ENCODE measurements at regions of chr1 and their contacts with region 1.

Region 1: GRCh38 chr1:16078925-16079656 is 5.6 kb upstream of the FAM131C start:
- DNase-seq: peak; percentile 55
- H3K4me3 ChIP-seq: no peak overlapping the region
- H3K27ac ChIP-seq: no peak overlapping the region
- H3K4me1 ChIP-seq: peaks cover 29% of the 10 kb centered on the region
- H3K27me3 ChIP-seq: no peaks in the 10 kb centered on the region
- CTCF ChIP-seq: peak; percentile 93 to 96

Region 2: GRCh38 chr1:15916417-15916816 is 162.7 kb before region 1 on chr1:
- CTCF ChIA-PET with region 1: no interaction called
- dilution Hi-C with region 1: no loop called
- in situ Hi-C with region 1: no loop called
- intact Hi-C with region 1: no loop called
- DNase-seq: peak; percentile 76
- H3K4me3 ChIP-seq: no peak overlapping the region
- H3K27ac ChIP-seq: peak overlapping the region; percentile 57
- H3K4me1 ChIP-seq: peaks cover 36% of the 10 kb centered on the region
- H3K27me3 ChIP-seq: no peaks in the 10 kb centered on the region
- CTCF ChIP-seq: no peak

Region 3: GRCh38 chr1:16122916-16123315 is 43.8 kb after region 1 on chr1:
- CTCF ChIA-PET with region 1: no interaction called
- dilution Hi-C with region 1: loop called (anchors 5 kb)
- in situ Hi-C with region 1: no loop called
- intact Hi-C with region 1: loop called (anchors 2 kb)
- DNase-seq: peak; percentile 97
- H3K4me3 ChIP-seq: no peak overlapping the region
- H3K27ac ChIP-seq: peak overlapping the region; percentile 43
- H3K4me1 ChIP-seq: peaks cover 43% of the 10 kb centered on the region
- H3K27me3 ChIP-seq: no peaks in the 10 kb centered on the region
- CTCF ChIP-seq: no peak

Region 4: GRCh38 chr1:16173020-16173980 is 94.2 kb after region 1 on chr1:
- CTCF ChIA-PET with region 1: interaction called, 27 read pairs
- dilution Hi-C with region 1: no loop called
- in situ Hi-C with region 1: no loop called
- intact Hi-C with region 1: no loop called
- DNase-seq: peak; percentile 97
- H3K4me3 ChIP-seq: no peak overlapping the region
- H3K27ac ChIP-seq: peak overlapping the region; percentile 97
- H3K4me1 ChIP-seq: peaks cover 52% of the 10 kb centered on the region
- H3K27me3 ChIP-seq: no peaks in the 10 kb centered on the region
- CTCF ChIP-seq: no peak

Region 5: DNA sequence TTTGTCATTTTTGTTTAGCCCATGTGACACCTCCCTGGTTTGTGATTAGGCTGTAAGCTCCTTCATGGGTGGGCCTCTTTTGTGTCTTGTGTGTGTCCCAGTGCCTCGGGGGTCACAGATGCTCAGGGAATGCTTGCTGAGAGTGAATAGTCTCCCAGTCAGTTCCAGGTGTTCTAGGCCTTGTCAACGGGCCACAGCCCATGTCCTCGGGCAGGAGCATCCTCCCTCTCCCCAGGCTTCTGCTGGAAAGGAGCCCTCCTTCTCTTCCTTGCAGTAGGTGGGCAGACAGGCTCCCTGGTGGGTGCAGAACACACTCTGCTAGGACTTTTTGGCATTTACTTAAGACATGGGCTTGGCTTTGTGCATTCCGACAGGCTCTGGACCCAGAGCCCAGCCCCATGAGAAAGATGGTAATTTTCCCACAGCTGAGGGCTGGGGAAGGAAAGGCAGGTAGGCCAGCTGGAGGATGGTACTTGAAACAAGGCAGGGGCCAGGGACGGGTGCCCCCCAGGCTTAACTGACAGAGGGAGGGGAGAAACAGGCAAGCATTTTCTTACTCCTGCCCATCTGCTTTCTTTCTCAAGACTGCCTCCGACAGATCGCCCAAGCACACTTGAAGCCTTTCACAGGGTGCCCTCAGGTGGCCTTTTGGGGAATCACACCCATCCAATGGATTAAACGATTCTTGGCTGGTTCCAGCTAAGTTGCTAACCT is 165.0 kb after region 1 on chr1:
- CTCF ChIA-PET with region 1: interaction called, 3 read pairs
- dilution Hi-C with region 1: no loop called
- in situ Hi-C with region 1: loop called (anchors 5 kb)
- intact Hi-C with region 1: loop called (anchors 1 kb)
- DNase-seq: peak; percentile 66
- H3K4me3 ChIP-seq: no peak overlapping the region
- H3K27ac ChIP-seq: no peak overlapping the region
- H3K4me1 ChIP-seq: peaks cover 12% of the 10 kb centered on the region
- H3K27me3 ChIP-seq: no peaks in the 10 kb centered on the region
- CTCF ChIP-seq: peak; percentile 86

Region 6: DNA sequence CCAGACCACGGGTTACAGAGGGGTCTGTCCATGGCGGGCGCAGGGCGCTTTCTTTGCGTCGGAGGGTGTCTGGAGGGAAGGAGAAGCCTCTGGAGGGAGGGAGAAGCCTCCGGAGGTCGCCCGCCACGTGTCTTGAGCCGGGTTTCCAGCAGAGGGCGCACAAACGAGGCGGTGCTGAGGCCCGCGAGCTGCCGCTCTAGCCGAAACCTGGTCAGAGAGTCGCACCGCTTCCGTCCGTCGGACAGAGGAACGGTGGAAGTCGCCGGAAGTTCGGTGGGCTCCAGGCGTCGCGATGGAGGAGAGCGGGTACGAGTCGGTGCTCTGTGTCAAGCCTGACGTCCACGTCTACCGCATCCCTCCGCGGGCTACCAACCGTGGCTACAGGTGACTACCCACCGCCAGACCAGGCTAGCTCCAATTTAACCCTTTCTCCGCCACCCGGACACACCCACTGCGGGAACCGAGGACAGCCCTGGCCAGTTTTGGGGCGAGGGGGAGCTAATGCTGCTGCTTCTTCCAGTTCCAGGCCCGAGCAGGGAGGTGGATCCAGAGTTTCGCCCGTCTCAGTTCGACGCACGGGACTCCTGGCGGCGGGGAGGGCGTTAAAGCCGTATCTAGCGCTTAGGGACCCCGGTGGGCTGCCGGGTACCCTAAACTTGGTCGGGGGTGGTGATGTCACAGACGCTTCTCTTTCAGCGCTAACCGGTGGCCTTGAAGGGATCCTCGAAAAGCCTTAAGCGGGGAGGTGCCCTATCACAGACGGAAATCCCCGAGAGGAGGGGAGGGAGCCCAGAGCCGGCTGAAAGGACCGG is 361.6 kb after region 1 on chr1 and contains the start of gene NECAP2:
- CTCF ChIA-PET with region 1: no interaction called
- dilution Hi-C with region 1: no loop called
- in situ Hi-C with region 1: no loop called
- intact Hi-C with region 1: loop called (anchors 1 kb)
- DNase-seq: peak; percentile 80
- H3K4me3 ChIP-seq: peak within 1 kb of the TSS; percentile 76 to 99 (median 76)
- H3K27ac ChIP-seq: peak within 1 kb of the TSS; percentile 79
- H3K4me1 ChIP-seq: peaks cover 5% of the 10 kb centered on the region
- H3K27me3 ChIP-seq: no peaks in the 10 kb centered on the region
- CTCF ChIP-seq: peak; percentile 59 to 78
- total RNA-seq, gene NECAP2: 55.1 to 75.8 TPM

Region 7: DNA sequence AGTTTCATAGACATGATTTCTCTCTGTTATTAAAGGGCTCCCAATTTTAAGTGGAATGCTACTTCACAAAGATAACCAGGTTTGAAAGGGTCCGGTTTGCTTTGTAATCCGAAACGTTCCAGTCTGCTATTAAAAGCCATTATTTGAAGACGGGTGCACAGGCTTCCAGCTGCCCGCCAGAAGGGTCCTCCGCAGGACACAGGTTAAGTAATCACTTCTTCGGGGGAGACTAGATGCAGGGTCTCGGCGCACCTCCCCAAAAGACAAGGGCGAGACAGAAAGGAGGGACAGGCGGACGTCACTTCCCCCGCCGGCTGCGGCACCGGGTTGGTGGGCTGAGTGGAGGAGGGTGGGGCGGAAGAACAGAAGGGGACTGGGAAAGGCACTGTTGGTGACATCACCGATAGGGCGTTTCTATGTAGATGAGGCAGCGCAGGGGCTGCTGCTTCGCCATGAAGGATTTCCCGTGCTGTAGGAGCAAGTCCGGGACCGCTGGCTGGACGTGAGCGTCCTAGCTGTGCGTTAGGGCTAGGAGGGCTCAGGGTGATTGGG is 825.5 kb after region 1 on chr1:
- CTCF ChIA-PET with region 1: no interaction called
- dilution Hi-C with region 1: no loop called
- in situ Hi-C with region 1: no loop called
- intact Hi-C with region 1: loop called (anchors 5 kb)
- DNase-seq: peak; percentile 97
- H3K4me3 ChIP-seq: peak overlapping the region; percentile 52 to 69 (median 54)
- H3K27ac ChIP-seq: peak overlapping the region; percentile 100
- H3K4me1 ChIP-seq: peaks cover 19% of the 10 kb centered on the region
- H3K27me3 ChIP-seq: no peaks in the 10 kb centered on the region
- CTCF ChIP-seq: no peak